RWPE1 (cell line): ENCODE measurements at regions of chr2 and their contacts with region 1.

Region 1: GRCh38 chr2:24409700-24410556 is 49.6 kb upstream of the ITSN2 start:
- DNase-seq: peak; percentile 67
- H3K27ac ChIP-seq: no peak overlapping the region
- CTCF ChIP-seq: peak; percentile 80

Region 2: GRCh38 chr2:24827321-24828237 is 417.7 kb after region 1 on chr2:
- CTCF ChIA-PET with region 1: interaction called, 22 read pairs
- POLR2A ChIA-PET with region 1: no interaction called
- DNase-seq: peak; percentile 81
- H3K27ac ChIP-seq: peak overlapping the region; percentile 25
- CTCF ChIP-seq: peak; percentile 82